Dorsolateral prefrontal cortex (tissue), 120 donors: ENCODE measurements at regions of chr2 and their contacts with region 1.

Region 1: DNA sequence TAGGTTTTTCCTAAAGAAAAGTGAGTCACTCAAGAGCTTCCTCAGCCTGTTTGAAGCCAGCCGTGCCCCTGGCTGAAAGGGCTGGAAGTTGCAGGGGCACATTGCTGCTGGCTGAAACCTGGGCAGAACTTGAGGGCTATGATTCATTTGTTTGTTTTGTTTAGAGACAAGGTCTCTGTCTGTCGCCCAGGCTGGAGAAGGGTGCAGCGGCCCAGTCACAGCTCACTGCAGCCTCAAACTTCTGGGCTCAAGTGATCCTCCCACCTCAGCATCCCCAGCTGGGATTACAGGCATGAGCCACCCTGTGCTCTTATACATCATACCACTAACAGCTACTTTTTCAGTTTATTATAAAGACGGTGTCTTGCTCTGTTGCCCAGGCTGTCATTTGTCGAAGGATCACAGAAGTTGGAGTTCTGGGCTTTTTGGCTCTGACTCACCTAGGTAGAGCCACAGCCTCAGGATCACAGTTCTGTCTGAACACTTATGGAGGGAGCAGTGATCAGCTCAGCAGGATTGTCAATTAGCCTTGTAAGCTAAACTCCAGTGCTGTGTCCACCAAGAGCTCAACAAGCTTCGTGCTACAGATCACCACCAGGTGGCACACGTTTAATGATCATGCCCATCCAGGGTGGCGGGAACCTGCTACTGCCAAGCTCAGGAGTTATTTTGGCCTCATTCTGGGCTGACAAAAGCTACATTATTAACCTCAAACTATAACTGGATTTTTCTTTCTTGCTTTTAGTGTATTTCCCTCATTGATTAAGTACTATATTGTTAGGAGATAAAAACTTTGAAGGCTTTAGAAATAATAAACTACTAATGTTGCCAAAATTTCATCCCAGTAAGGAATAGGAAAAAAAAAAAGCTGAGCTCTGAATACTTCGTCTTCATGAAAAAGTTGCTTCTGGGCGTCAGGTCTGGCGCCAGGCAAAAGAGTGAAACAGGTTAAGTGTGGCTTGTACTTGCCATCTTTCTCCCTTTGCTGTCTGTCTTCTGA is 57.9 kb downstream of the ARHGEF33 start:
- DNase-seq: peak; percentile 37 to 85 (median 68)
- H3K4me3 ChIP-seq: no peak overlapping the region
- H3K27ac ChIP-seq: no peak overlapping the region
- H3K27me3 ChIP-seq: no peaks in the 10 kb centered on the region
- CTCF ChIP-seq: peak; percentile 54 to 83 (median 70)

Region 2: DNA sequence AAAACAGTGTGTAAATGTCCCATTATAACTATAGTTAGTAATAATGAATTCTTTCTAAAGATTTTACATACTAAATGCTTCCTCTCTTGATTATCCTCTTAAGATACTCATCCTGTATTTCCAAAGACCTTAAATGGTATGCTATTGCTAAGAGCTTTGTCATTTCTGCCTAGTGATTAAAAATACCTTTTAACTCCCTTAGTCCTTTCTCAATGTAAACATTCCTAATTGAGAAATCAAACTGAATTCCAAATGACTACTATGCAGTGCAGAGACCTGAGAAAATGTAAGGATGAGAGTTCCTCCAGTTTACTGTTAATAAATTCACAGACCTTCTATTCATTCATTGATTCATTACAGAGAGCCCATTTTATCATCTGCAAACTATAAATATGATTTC is 86.4 kb after region 1 on chr2:
- intact Hi-C with region 1: loop called in 1 of 2 experiments (anchors 10 kb)
- DNase-seq: no peak
- H3K4me3 ChIP-seq: no peak overlapping the region
- H3K27ac ChIP-seq: no peak overlapping the region
- H3K27me3 ChIP-seq: no peaks in the 10 kb centered on the region
- CTCF ChIP-seq: no peak

Region 3: GRCh38 chr2:39227628-39228412 is 280.3 kb after region 1 on chr2:
- intact Hi-C with region 1: loop called (anchors 10 kb)
- DNase-seq: peak; percentile 71 to 87 (median 76)
- H3K4me3 ChIP-seq: peak overlapping the region; percentile 6 to 71 (median 49)
- H3K27ac ChIP-seq: peak overlapping the region in 5 of 59 donors; percentile 9 to 44 (median 30)
- H3K27me3 ChIP-seq: no peaks in the 10 kb centered on the region
- CTCF ChIP-seq: peak; percentile 78 to 98 (median 90)